Sigmoid colon (tissue), 7 donors: ENCODE measurements at regions of chr4 and their contacts with region 1.

Region 1: GRCh38 chr4:56757821-56758411 is 63.6 kb downstream of the SPINK2 start:
- DNase-seq: peak; percentile 83
- H3K4me3 ChIP-seq: no peak overlapping the region
- H3K27ac ChIP-seq: peak overlapping the region; percentile 32 to 84 (median 72)
- H3K4me1 ChIP-seq: peaks cover 0 to 24% (median 21%) of the 10 kb centered on the region in 4 donors
- H3K27me3 ChIP-seq: no peaks in the 10 kb centered on the region
- CTCF ChIP-seq: no peak
- EP300 ChIP-seq: no peak
- POLR2A ChIP-seq: no peak

Region 2: GRCh38 chr4:55409468-55410171 is 1348.3 kb before region 1 on chr4:
- intact Hi-C with region 1: no loop called
- DNase-seq: no peak
- H3K4me3 ChIP-seq: no peak overlapping the region
- H3K27ac ChIP-seq: no peak overlapping the region
- H3K4me1 ChIP-seq: peaks cover 0 to 30% (median 28%) of the 10 kb centered on the region in 4 donors
- H3K27me3 ChIP-seq: no peaks in the 10 kb centered on the region
- CTCF ChIP-seq: peak in 1 of 4 experiments; percentile 18
- EP300 ChIP-seq: no peak
- POLR2A ChIP-seq: no peak

Region 3: DNA sequence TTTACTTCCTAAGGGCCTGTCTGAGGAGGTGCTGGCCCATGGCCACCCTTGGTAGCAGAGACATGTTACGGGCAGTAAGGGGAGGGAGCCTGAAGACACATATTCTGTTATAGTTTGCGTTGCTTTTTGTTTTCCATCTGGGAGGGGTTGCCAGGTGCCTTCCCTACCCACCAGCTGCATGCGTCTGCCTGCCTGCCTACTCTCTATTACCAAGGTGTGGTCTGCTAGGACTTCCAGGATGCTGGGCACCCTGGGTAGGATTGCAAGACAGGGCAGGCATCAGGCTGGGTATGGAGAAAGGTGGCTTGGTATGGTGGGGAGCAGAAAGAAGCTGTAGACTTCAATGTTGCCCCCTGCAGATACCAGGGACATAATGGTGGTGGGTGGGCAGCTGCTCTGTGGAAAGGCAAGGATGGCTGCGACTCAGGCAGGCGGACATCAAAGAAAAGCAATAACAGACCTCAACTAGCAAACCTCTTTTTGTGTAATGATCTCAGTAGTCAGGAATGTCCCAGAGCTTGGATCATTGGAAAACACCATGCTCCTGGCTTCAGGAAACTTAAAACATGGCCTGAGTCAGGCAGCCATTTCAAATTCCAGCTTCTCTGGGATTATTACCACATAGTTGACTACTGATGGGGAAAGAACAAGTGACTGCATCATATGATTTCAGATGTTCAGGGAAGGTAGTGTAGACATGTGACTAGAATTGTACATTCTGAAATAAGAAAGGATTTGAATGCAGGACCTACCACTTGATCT is 144.6 kb before region 1 on chr4:
- intact Hi-C with region 1: no loop called
- DNase-seq: no peak
- H3K4me3 ChIP-seq: no peak overlapping the region
- H3K27ac ChIP-seq: peak overlapping the region in 1 of 4 donors; percentile 6
- H3K4me1 ChIP-seq: no peaks in the 10 kb centered on the region
- H3K27me3 ChIP-seq: no peaks in the 10 kb centered on the region
- CTCF ChIP-seq: no peak
- EP300 ChIP-seq: no peak
- POLR2A ChIP-seq: no peak

Region 4: DNA sequence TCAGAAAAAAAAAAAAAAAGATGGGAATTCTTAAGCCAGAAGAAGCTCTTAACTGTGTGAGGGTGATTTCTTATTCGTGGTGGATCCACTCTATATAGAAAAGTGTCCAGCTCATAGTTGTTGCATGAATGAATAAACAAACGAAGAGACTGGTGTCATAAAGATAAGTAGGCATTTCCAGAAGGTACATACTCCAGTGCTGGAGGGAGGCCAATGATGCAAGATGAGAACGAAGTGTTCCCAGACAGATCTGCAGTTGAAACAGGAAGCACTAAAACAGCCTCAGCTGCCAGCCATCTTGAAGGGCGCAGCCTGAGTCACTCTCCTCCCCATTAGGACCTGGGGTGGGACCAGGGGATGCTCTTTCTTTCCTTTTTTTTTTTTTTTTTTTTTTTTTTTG is 29.4 kb before region 1 on chr4:
- intact Hi-C with region 1: loop called (anchors 2 kb)
- DNase-seq: peak; percentile 96
- H3K4me3 ChIP-seq: no peak overlapping the region
- H3K27ac ChIP-seq: peak overlapping the region; percentile 63 to 79 (median 71)
- H3K4me1 ChIP-seq: peaks cover 0 to 21% (median 12%) of the 10 kb centered on the region in 4 donors
- H3K27me3 ChIP-seq: no peaks in the 10 kb centered on the region
- CTCF ChIP-seq: no peak
- EP300 ChIP-seq: peak; percentile 90 to 99 (median 98)
- POLR2A ChIP-seq: no peak